Prostate gland (tissue), 2 donors: ENCODE measurements at regions of chr6 and their contacts with region 1.

Region 1: DNA sequence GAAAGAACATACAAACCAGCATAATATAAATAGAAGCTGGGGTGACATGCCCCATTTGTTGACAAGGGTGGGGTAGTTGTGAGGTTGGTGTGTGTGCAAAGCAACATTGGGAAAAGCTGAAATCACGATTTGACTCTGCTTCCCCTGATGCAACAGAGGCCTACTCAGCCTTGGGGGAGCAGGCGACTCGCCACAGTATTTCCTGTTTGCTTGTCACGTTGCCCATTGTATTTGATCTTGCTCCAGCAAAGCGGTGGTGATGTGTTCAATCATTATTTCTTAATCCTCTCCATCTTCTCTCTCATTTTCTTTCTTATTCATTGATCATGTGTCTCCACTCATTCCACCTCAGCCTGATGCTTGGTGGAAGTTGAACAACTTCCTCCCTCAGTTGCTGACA is 165.8 kb upstream of the CITED2 start:
- DNase-seq: no peak
- H3K4me3 ChIP-seq: no peak overlapping the region
- H3K27ac ChIP-seq: no peak overlapping the region
- H3K4me1 ChIP-seq: peaks cover 2% of the 10 kb centered on the region
- H3K27me3 ChIP-seq: no peaks in the 10 kb centered on the region
- CTCF ChIP-seq: no peak
- POLR2A ChIP-seq: no peak

Region 2: DNA sequence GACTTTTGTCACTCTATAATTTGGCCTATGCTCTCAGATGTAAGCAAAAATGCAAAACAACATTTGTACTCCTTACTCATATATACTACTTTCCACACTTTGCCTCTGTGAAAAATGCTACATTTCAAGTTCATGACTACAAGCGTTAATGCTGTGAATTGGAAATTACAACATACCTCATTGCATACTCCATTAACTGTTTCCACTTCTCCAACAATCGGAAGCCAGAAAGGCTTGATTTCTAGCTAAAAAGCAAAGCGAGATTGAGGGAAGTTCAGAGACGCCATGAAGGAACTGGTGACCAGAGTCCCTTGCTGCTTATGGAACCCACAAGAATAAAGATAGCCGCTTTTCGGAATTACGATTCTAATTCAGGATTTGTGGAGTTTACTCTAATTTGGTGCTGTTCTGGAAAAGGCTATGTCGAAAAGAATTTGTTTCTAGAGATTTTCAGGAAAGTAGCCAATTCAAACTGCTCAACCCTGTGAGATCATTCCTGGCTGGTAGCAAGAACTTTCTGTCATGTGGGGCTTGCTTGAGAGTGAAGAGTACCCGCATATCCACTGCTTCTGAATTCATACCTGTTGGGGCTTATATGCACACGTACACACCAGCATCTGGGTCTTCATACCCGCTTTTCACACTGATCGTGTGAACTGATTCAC is 67.8 kb before region 1 on chr6:
- intact Hi-C with region 1: no loop called
- DNase-seq: no peak
- H3K4me3 ChIP-seq: no peak overlapping the region
- H3K27ac ChIP-seq: no peak overlapping the region
- H3K4me1 ChIP-seq: no peaks in the 10 kb centered on the region
- H3K27me3 ChIP-seq: no peaks in the 10 kb centered on the region
- CTCF ChIP-seq: no peak
- POLR2A ChIP-seq: no peak

Region 3: GRCh38 chr6:139490482-139490881 is 49.8 kb before region 1 on chr6:
- intact Hi-C with region 1: no loop called
- DNase-seq: no peak
- H3K4me3 ChIP-seq: no peak overlapping the region
- H3K27ac ChIP-seq: no peak overlapping the region
- H3K4me1 ChIP-seq: peaks cover 6% of the 10 kb centered on the region
- H3K27me3 ChIP-seq: no peaks in the 10 kb centered on the region
- CTCF ChIP-seq: no peak
- POLR2A ChIP-seq: no peak

Region 4: DNA sequence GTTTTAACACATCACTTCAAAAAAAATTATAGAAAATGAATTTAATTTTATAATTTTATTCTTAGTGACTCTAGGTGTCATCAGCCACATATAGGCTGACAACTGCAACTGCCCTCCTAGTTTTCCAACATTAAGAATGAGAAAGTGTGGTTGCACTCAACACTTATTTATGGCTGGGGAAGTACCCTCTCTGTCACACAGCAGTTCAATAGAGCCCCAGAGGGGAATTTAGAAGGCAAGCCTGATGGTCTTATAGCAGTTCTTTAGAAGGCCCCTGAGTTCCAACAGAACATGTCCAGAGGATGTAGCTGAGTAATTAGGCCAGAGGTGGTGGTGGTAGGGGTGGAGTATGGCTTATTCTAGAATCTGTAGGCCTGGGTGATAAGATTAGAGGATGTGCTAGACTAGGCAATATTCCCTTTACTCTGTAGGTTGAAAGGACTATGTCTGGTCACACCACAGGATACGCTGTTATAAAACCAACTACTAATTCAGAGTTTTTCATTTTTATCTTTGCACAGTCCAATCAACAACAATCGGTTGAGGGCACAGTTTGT is 60.7 kb after region 1 on chr6:
- intact Hi-C with region 1: no loop called
- DNase-seq: no peak
- H3K4me3 ChIP-seq: no peak overlapping the region
- H3K27ac ChIP-seq: no peak overlapping the region
- H3K4me1 ChIP-seq: peaks cover 8% of the 10 kb centered on the region
- H3K27me3 ChIP-seq: no peaks in the 10 kb centered on the region
- CTCF ChIP-seq: no peak
- POLR2A ChIP-seq: no peak

Region 5: GRCh38 chr6:139764498-139764986 is 224.3 kb after region 1 on chr6:
- intact Hi-C with region 1: loop called (anchors 10 kb)
- DNase-seq: no peak
- H3K4me3 ChIP-seq: no peak overlapping the region
- H3K27ac ChIP-seq: peak overlapping the region; percentile 26 to 38
- H3K4me1 ChIP-seq: no peaks in the 10 kb centered on the region
- H3K27me3 ChIP-seq: no peaks in the 10 kb centered on the region
- CTCF ChIP-seq: no peak
- POLR2A ChIP-seq: no peak

Region 6: DNA sequence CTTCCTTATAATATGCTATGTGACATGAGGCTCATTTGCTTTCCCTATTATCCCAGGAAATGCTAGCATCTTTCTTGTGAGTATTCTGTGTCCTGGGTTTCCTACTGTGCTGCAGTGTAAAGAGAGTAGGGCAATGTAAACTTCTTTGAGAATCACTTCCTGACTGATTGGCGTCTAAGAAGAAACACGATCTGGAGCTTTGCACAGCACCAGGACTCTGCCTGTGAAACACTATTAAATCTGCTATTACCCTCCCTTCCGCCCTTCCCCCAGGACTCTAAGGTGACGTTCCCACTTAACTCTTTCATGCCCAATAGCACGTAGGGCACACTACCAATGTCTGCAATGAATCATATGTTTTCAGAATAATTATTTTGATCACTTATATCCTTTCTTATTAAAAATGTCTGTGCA is 441.5 kb after region 1 on chr6:
- intact Hi-C with region 1: loop called (anchors 10 kb)
- DNase-seq: peak; percentile 42
- H3K4me3 ChIP-seq: no peak overlapping the region
- H3K27ac ChIP-seq: peak overlapping the region in 1 of 2 donors; percentile 2
- H3K4me1 ChIP-seq: peaks cover 6% of the 10 kb centered on the region
- H3K27me3 ChIP-seq: no peaks in the 10 kb centered on the region
- CTCF ChIP-seq: no peak
- POLR2A ChIP-seq: no peak